ENCODE measurements at regions of chr5 and their contacts with region 1.

Region 1: DNA sequence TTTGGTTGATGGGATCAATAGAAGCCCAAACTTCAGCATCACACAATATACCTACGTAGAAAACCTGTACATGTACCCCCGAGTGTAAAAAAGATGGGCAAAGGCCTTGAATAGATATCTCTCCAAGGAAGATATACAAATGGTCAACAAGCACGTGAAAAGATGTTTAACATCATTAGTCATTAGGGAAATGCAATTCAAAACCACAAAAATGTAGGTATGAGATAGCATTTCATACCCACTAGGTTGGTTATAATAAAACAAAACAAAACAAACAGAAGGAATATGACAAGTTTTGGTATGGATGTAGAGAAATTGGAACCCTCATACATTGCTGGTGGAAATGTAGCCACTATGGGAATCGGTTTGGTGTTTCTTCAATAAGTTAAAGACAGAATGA is 33.1 kb upstream of the PPARGC1B start:
- DNase-seq: peak; percentile 89
- ATAC-seq: peak; percentile 81
- H3K4me3 ChIP-seq: no peak overlapping the region
- H3K27ac ChIP-seq: no peak overlapping the region
- H3K4me1 ChIP-seq: peaks cover 18% of the 10 kb centered on the region
- H3K27me3 ChIP-seq: no peaks in the 10 kb centered on the region
- CTCF ChIP-seq: no peak

Region 2: DNA sequence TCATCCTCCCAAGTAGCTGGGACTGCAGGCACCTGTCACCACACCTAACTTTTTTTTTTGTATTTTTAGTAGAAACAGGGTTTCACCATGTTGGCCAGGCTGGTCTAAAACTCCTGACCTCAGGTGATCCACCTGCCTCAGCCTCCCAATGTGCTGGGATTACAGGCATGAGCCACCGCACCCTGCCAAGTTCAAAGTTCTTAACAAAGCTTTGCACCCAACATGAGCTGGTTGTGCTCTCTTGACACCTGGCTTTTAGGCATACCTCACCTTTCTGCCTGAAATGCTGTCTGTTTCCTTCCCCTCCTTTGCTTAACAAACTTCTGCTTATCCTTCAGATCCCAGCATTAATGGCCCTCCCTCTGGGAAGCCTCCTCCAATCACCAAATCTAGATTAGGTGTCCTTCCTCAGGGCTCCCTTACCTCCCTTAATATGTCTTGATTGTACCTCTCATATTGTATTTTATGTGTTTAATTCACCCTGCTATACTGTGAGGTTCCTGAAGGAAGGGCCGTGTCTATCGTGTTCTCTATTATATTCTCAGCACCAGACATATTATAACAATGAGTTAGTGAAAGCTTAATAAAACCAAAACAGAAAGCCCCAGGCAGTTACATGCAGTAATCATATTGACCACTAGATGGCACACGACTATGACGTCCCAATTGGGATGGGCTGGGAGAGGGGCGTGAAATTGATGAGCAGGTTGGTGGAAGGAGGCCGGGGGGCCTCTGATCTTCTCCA is 29.7 kb before region 1 on chr5:
- CTCF ChIA-PET with region 1: no interaction called
- POLR2A ChIA-PET with region 1: no interaction called
- intact Hi-C with region 1: loop called (anchors 1 kb)
- DNase-seq: peak; percentile 79
- ATAC-seq: peak; percentile 47
- H3K4me3 ChIP-seq: no peak overlapping the region
- H3K27ac ChIP-seq: no peak overlapping the region
- H3K4me1 ChIP-seq: no peaks in the 10 kb centered on the region
- H3K27me3 ChIP-seq: no peaks in the 10 kb centered on the region
- CTCF ChIP-seq: peak; percentile 99